Calu3 (cell line): ENCODE measurements at regions of chr7 and their contacts with region 1.

Region 1: DNA sequence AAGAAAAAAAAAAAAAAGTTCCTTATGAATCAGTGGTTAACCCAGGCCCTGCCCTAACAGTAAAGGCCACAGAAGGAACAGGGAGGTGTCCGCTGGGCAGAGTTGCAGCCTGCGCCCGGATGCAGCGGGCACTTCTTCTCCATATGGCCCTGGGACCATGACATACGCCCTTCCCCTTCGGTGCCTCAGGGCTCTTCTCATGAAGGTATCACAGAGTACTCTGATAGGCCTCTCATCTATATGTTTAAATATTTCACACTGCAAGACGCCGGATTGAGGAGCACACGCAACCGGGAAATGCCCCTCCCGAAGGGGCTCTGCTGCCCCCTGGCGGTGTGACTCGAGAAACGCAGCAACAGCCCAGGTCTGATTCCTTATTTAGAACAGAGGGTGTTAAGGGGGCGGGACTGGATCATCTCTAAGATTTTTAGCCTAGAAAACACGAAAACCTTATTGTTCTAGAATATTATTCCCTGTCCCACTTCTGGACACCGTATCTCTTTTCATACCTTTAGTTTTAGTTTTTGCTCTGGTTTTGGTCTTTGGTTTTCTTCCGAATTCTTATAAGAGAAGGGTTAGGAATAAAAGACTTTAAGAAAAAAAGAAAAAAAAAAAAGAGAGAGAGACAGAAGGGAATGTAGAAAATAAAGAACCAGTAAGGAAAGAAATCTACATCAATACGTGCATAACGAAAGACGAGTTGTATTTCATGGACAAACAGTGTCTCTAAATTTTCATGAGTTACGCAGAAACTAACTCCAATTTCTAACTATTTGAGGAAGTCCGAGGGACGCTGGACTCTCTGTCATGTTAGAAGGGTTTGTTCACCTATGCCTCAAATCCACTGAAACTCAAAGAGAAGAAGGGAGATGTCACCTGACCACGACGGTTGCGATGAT is 12.0 kb downstream of the DAGLB start:
- DNase-seq: peak; percentile 95
- H3K4me3 Mint-ChIP-seq: no peak overlapping the region
- H3K27ac Mint-ChIP-seq: no peak overlapping the region
- H3K4me1 Mint-ChIP-seq: peaks cover 27% of the 10 kb centered on the region
- H3K27me3 Mint-ChIP-seq: no peaks in the 10 kb centered on the region
- CTCF ChIP-seq: peak; percentile 98

Region 2: GRCh38 chr7:5854738-5855137 is 581.0 kb before region 1 on chr7:
- CTCF ChIA-PET with region 1: no interaction called
- intact Hi-C with region 1: loop called (anchors 10 kb)
- DNase-seq: no peak
- H3K4me3 Mint-ChIP-seq: no peak overlapping the region
- H3K27ac Mint-ChIP-seq: no peak overlapping the region
- H3K4me1 Mint-ChIP-seq: no peaks in the 10 kb centered on the region
- H3K27me3 Mint-ChIP-seq: no peaks in the 10 kb centered on the region
- CTCF ChIP-seq: no peak

Region 3: DNA sequence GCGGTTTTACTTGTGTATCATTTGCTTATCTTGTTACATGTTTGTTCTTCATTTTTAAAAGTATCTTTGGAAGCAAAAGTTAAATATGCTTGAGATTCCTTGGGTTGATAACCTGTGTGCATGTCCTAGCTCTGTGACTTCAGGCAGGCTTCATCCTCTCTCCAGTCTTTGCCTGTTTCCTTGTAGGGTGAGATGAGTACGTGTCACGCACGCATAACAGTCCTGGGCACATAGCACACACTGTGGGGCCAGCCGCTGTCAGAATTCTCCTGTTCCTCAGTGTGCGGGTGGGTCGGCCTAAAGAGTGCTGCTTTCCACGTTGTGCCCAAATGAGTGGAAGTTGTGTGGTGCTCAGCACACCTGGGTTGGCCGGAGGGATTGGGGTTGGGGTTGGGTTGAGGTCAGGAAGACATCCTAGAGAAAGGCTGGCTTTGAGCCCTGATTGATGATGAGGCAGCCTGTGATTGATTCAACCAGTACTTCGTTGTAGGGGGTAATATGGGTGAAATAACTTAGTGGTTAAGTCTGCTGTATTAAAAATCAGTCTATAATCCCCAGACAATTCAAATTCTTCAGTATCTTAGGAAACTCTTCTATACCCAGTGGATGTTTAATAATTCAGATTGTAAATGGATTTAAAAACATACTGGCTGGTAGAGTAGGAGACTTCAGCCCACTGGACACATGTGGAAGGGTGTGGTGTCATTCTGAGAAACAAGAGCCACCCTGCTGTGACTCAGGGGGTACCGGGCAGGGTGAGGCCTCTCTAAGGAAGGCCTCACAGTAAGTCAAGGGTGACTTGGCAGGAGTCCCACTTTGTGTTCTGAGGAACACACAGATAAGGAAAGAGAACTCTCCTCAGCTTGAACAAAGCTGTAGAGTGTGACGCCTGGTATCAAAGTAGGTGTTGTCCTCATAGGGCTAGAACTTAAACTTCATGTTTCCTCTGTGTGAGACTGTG is 42.7 kb before region 1 on chr7:
- CTCF ChIA-PET with region 1: interaction called, 3 read pairs
- intact Hi-C with region 1: loop called (anchors 5 kb)
- DNase-seq: peak; percentile 96
- H3K4me3 Mint-ChIP-seq: peak overlapping the region; percentile 62
- H3K27ac Mint-ChIP-seq: peak overlapping the region; percentile 89
- H3K4me1 Mint-ChIP-seq: peaks cover 78% of the 10 kb centered on the region
- H3K27me3 Mint-ChIP-seq: no peaks in the 10 kb centered on the region
- CTCF ChIP-seq: no peak

Region 4: GRCh38 chr7:6416516-6417145 is 19.1 kb before region 1 on chr7:
- CTCF ChIA-PET with region 1: no interaction called
- intact Hi-C with region 1: no loop called
- DNase-seq: no peak
- H3K4me3 Mint-ChIP-seq: no peak overlapping the region
- H3K27ac Mint-ChIP-seq: peak overlapping the region; percentile 44
- H3K4me1 Mint-ChIP-seq: no peaks in the 10 kb centered on the region
- H3K27me3 Mint-ChIP-seq: no peaks in the 10 kb centered on the region
- CTCF ChIP-seq: no peak